Activated T-helper 2 cell treated with anti-CD3 and anti-CD28 coated beads, Interferon-gamma antibody, Interleukin-2, Interleukin-4, amounts not matched to agents 10 μg/mL and 5 μg/mL and 100 μg/mL, durations not matched to agents 14 hours and 24 hours and 36 hours (primary cell): ENCODE measurements at regions of chr3 and their contacts with region 1.

Region 1: GRCh38 chr3:20104167-20104661 is 64.0 kb downstream of the KAT2B start:
- DNase-seq: peak; percentile 40
- H3K4me3 Mint-ChIP-seq: no peak overlapping the region
- H3K27ac Mint-ChIP-seq: peak overlapping the region; percentile 16
- H3K4me1 Mint-ChIP-seq: peaks cover 59% of the 10 kb centered on the region
- H3K27me3 Mint-ChIP-seq: no peaks in the 10 kb centered on the region

Region 2: GRCh38 chr3:19937459-19938294 is 166.5 kb before region 1 on chr3:
- intact Hi-C with region 1: loop called (anchors 1 kb)
- DNase-seq: no peak
- H3K4me3 Mint-ChIP-seq: no peak overlapping the region
- H3K27ac Mint-ChIP-seq: peak overlapping the region; percentile 84
- H3K4me1 Mint-ChIP-seq: peaks cover 39% of the 10 kb centered on the region
- H3K27me3 Mint-ChIP-seq: peaks cover 6% of the 10 kb centered on the region

Region 3: GRCh38 chr3:20054549-20054987 is 49.6 kb before region 1 on chr3:
- intact Hi-C with region 1: loop called (anchors 1 kb)
- DNase-seq: peak; percentile 39
- H3K4me3 Mint-ChIP-seq: no peak overlapping the region
- H3K27ac Mint-ChIP-seq: no peak overlapping the region
- H3K4me1 Mint-ChIP-seq: peaks cover 25% of the 10 kb centered on the region
- H3K27me3 Mint-ChIP-seq: no peaks in the 10 kb centered on the region

Region 4: GRCh38 chr3:20125897-20126296 is 21.7 kb after region 1 on chr3:
- intact Hi-C with region 1: no loop called
- DNase-seq: no peak
- H3K4me3 Mint-ChIP-seq: no peak overlapping the region
- H3K27ac Mint-ChIP-seq: no peak overlapping the region
- H3K4me1 Mint-ChIP-seq: peaks cover 2% of the 10 kb centered on the region
- H3K27me3 Mint-ChIP-seq: no peaks in the 10 kb centered on the region